ENCODE measurements at regions of chr13 and their contacts with region 1.

Region 1: DNA sequence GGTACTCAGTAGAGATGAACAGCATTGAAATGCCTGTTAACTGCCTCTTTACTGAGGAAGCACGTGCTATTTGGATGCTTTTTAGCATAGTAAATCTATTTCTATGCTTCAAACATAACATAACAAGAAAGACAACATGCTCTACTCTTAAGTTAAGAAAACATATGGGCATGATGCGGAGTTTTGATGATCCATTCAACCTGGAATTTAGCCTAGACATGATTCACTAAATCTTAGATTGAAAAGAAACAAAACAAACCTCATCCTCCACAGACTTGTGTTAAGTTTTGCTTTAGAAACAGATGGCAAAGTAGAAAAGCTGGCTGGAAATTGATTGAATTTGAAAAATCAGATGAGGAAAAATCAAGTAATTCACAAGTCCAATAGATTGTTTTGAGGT is 593.8 kb downstream of the OLFM4 start:
- DNase-seq: no peak
- H3K4me3 ChIP-seq: no peak overlapping the region
- H3K27ac ChIP-seq: no peak overlapping the region
- H3K4me1 ChIP-seq: no peaks in the 10 kb centered on the region
- H3K27me3 ChIP-seq: no peaks in the 10 kb centered on the region
- CTCF ChIP-seq: no peak
- EP300 ChIP-seq: no peak
- POLR2A ChIP-seq: no peak

Region 2: GRCh38 chr13:53666382-53666781 is 43.9 kb after region 1 on chr13:
- in situ Hi-C with region 1: no loop called
- intact Hi-C with region 1: loop called (anchors 2 kb)
- DNase-seq: no peak
- H3K4me3 ChIP-seq: no peak overlapping the region
- H3K27ac ChIP-seq: no peak overlapping the region
- H3K4me1 ChIP-seq: no peaks in the 10 kb centered on the region
- H3K27me3 ChIP-seq: no peaks in the 10 kb centered on the region
- CTCF ChIP-seq: no peak
- EP300 ChIP-seq: no peak
- POLR2A ChIP-seq: no peak

Region 3: DNA sequence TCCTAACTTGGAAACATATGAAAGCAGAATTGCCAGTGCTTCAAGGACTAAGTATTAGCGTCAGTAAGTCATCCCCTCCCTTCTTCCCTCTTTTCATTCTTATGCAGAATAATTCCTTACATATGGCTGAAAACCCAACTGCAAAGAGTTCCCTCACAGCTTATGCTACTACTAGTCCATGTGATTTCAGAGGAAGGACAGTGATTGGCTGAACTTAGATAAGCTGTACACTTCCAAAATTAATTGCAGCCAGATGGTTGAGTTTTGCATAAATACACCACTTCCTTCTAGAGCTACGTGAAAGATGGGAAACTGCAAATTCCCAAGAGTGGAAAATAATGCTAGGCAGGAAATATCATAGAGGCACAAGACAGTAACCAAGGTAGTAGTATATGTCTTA is 136.6 kb after region 1 on chr13:
- in situ Hi-C with region 1: no loop called
- intact Hi-C with region 1: no loop called
- DNase-seq: no peak
- H3K4me3 ChIP-seq: no peak overlapping the region
- H3K27ac ChIP-seq: no peak overlapping the region
- H3K4me1 ChIP-seq: no peaks in the 10 kb centered on the region
- H3K27me3 ChIP-seq: no peaks in the 10 kb centered on the region
- CTCF ChIP-seq: no peak
- EP300 ChIP-seq: no peak
- POLR2A ChIP-seq: no peak